ENCODE measurements at regions of chr3 and their contacts with region 1.

Region 1: GRCh38 chr3:73080216-73080966 is 18.9 kb downstream of the EBLN2 start:
- DNase-seq: no peak
- H3K4me3 ChIP-seq: no peak overlapping the region
- H3K27ac ChIP-seq: no peak overlapping the region
- H3K4me1 ChIP-seq: no peaks in the 10 kb centered on the region
- H3K27me3 ChIP-seq: no peaks in the 10 kb centered on the region
- CTCF ChIP-seq: no peak
- EP300 ChIP-seq: no peak
- POLR2A ChIP-seq: no peak

Region 2: GRCh38 chr3:72938471-72939265 is 141.7 kb before region 1 on chr3:
- in situ Hi-C with region 1: loop called in 1 of 4 experiments (anchors 10 kb)
- intact Hi-C with region 1: loop called (anchors 5 kb)
- DNase-seq: peak; percentile 28
- H3K4me3 ChIP-seq: no peak overlapping the region
- H3K27ac ChIP-seq: peak overlapping the region; percentile 29 to 62 (median 49)
- H3K4me1 ChIP-seq: peaks cover 0 to 32% (median 7%) of the 10 kb centered on the region in 4 donors
- H3K27me3 ChIP-seq: no peaks in the 10 kb centered on the region
- CTCF ChIP-seq: peak; percentile 49 to 96 (median 65)
- EP300 ChIP-seq: no peak
- POLR2A ChIP-seq: no peak